Naive thymus-derived CD4-positive, alpha-beta T cell (primary cell): ENCODE measurements at regions of chr2 and their contacts with region 1.

Region 1: DNA sequence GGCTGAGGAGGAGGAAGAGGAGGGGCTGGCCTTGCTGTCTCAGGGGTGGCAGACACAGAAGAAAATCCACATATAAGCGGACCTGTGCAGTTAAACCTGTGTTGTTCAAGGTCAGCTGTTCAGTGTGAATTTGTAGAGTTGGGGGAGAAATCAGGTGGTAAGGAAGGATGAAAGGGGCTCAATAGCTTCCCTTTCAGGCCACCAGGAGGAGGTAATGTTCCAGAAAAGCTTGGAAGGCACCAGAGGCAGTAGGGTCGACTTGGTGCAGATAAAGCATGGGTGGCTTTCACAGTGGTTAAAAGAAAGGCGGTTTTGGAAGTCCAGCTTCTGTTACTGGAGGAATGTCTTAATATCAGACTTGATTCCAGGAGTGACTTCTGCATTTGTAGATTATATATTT is 167.4 kb downstream of the THSD7B start:
- DNase-seq: no peak
- ATAC-seq: no peak
- H3K4me3 ChIP-seq: no peak overlapping the region
- H3K4me3 Mint-ChIP-seq: no peak overlapping the region
- H3K27ac ChIP-seq: no peak overlapping the region
- H3K27ac Mint-ChIP-seq: no peak overlapping the region
- H3K4me1 ChIP-seq: no peaks in the 10 kb centered on the region
- H3K4me1 Mint-ChIP-seq: no peaks in the 10 kb centered on the region
- H3K27me3 ChIP-seq: peaks cover 0 to 3% of the 10 kb centered on the region in 2 donors
- H3K27me3 Mint-ChIP-seq: peaks cover 0 to 6% (median 0%) of the 10 kb centered on the region in 5 donors

Region 2: GRCh38 chr2:137566387-137566786 is 633.7 kb after region 1 on chr2:
- CTCF ChIA-PET with region 1: no interaction called
- POLR2A ChIA-PET with region 1: no interaction called
- intact Hi-C with region 1: no loop called
- DNase-seq: no peak
- ATAC-seq: no peak
- H3K4me3 ChIP-seq: no peak overlapping the region
- H3K4me3 Mint-ChIP-seq: no peak overlapping the region
- H3K27ac ChIP-seq: no peak overlapping the region
- H3K27ac Mint-ChIP-seq: no peak overlapping the region
- H3K4me1 ChIP-seq: no peaks in the 10 kb centered on the region
- H3K4me1 Mint-ChIP-seq: no peaks in the 10 kb centered on the region
- H3K27me3 ChIP-seq: no peaks in the 10 kb centered on the region
- H3K27me3 Mint-ChIP-seq: no peaks in the 10 kb centered on the region

Region 3: DNA sequence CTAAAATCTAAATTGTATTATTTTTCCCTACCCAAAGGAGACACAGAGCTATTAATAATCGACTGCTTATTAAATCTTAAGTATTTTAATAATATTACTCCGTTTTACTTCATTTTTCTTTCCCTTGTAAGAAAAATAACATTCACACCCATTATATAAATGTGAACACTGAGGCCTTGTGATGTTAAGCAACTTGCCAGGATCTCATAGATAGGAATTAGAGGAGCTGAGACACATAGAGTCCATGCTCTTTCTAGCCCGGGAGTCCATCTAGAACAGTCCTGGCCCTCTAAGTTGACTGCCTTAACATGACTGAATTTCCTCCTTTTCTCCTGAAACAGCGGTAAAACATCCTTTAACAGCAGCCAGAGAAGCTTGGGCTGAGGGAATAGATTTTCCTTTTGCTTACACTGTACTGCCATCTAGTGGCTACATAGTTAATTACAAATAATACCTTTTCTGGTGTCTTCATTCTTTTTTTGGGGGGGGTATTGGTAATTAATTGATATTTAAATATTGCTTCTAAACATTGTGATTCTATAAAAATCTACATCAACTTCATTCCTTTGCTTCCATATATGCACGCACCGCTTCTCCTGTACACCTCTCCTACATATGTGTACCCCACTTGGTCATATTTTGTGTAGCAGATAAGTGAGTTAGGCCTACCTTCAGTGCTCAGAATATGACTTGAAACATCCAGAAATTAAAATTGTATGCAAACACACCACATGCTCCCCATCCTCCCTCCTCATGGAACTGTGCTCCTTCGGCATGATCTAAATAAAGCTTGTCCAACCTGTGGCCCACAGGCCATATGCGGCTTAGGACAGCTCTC is 905.8 kb after region 1 on chr2:
- CTCF ChIA-PET with region 1: no interaction called
- POLR2A ChIA-PET with region 1: no interaction called
- intact Hi-C with region 1: loop called in 1 of 2 experiments (anchors 5 kb)
- DNase-seq: peak in 6 of 9 donors; percentile 7 to 42 (median 32)
- ATAC-seq: peak; percentile 66
- H3K4me3 ChIP-seq: no peak overlapping the region
- H3K4me3 Mint-ChIP-seq: no peak overlapping the region
- H3K27ac ChIP-seq: no peak overlapping the region
- H3K27ac Mint-ChIP-seq: no peak overlapping the region
- H3K4me1 ChIP-seq: no peaks in the 10 kb centered on the region
- H3K4me1 Mint-ChIP-seq: no peaks in the 10 kb centered on the region
- H3K27me3 ChIP-seq: no peaks in the 10 kb centered on the region
- H3K27me3 Mint-ChIP-seq: peaks cover 0 to 15% (median 10%) of the 10 kb centered on the region in 5 donors